ENCODE measurements at regions of chr9 and their contacts with region 1.

Region 1: DNA sequence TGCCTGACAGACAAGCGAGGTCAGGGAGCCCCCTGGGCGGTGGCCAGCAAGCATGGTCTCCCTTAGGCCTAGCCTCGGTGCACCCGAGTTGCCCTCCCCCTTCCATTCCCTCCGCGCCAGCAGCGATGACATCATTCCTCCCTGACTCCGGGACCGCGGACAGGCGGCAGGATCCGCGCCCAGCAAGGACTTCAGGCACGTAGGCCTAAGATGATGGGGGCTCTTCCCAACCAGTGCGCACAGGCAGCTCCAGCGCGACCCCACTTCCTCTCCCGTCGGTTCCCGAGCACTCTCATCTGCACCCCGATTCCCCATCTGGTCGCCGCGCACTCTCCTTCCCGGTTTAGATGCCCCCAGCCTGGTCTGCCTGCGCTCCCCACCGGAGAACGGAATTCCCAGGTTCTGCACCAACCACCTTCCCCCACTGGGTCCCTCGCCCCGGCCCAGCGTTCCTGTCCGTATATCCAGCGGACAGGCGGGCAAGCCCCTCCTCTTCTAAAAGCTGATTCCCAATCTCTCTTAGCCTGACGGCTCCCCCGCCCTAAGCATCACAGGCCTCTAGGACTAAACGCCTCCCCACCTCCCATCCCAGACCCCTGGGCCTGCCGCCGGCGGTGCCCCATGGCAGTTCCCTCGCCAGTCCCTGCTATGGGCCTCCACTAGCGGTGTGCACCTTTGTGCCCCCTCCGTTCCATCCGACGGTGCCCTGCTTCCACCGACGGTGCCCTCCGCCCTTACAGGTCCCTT is 931 bp downstream of the FAM219A start:
- H3K4me3 ChIP-seq: peak overlapping the region; percentile 63
- H3K27ac ChIP-seq: peak overlapping the region; percentile 77
- H3K4me1 ChIP-seq: peaks cover 2% of the 10 kb centered on the region; the same call in 1 of the 2 replicates
- CTCF ChIP-seq: peak; percentile 6; the same call in 1 of the 2 replicates

Region 2: DNA sequence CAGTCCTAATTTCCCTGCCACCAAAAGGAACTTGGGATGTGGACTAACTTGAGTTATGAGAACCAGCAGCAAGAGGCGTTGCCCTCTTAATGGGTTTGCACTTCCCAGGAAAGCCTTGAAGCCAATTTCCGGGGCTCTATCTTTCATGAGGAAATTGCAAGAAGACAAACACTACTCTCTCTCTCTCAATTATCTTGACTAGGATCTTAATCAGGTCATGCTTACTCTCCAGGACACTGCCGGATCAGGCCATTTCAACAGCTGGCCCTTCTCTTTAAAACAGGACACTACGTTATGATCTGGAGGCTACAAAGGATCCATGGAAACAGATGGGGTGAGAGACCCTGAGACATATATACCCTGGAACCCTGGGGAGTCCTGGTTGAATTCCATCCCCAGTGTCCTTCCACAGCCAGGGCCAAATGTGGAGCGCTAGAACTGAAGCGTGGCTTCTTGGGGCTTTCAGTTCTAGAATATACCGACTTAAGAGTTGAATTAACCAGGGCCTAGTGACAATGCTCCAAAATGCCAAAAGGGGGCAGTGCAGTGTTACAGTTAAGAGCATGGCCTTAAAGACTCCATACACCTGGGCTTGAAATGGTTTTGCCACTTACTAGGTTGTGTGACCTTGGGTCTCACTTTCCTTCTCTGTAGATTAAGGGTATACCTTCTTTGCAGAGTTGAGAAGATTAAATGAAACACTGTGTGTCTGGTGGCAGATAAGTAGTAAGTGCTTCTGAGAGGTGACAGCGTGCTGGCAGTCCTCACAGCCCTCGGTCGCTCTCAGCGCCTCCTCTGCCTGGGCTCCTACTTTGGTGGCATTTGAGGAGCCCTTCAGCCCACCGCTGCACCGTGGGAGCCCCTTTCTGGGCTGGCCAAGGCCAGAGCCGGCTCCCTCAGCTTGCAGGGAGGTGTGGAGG is 20.2 kb before region 1 on chr9:
- CTCF ChIA-PET with region 1: interaction called, 20 read pairs
- POLR2A ChIA-PET with region 1: no interaction called
- H3K4me3 ChIP-seq: no peak overlapping the region
- H3K27ac ChIP-seq: no peak overlapping the region
- H3K4me1 ChIP-seq: no peaks in the 10 kb centered on the region
- CTCF ChIP-seq: 0 out of 2 replicates have a peak, but pooled peaks have one; percentile 14

Region 3: DNA sequence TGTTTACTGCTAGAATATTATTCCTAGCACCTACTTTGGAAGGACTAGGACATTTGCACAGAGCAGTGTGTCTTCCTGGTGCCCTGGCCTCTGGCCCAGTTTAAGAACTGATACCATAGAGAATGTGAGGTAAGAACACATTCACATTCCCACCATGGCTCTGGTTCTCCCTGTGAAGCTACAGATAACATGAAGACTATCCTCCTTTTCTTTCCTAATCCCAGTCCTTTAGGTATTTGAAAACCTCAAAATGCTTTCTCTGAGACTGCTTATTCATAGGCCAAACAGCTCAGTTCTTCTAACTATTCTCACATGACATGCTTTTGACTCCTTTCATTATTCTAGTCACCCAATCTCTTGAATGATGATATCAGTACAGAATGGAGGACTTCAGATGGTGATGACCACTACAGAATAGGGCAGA is 11.0 kb before region 1 on chr9:
- CTCF ChIA-PET with region 1: interaction called, 14 read pairs
- POLR2A ChIA-PET with region 1: interaction called, 8 read pairs
- H3K4me3 ChIP-seq: no peak overlapping the region
- H3K27ac ChIP-seq: no peak overlapping the region
- H3K4me1 ChIP-seq: no peaks in the 10 kb centered on the region
- CTCF ChIP-seq: no peak

Region 4: GRCh38 chr9:34479431-34479866 is 22.0 kb after region 1 on chr9:
- CTCF ChIA-PET with region 1: no interaction called
- POLR2A ChIA-PET with region 1: no interaction called
- H3K4me3 ChIP-seq: no peak overlapping the region
- H3K27ac ChIP-seq: no peak overlapping the region
- H3K4me1 ChIP-seq: no peaks in the 10 kb centered on the region
- CTCF ChIP-seq: no peak

Region 5: DNA sequence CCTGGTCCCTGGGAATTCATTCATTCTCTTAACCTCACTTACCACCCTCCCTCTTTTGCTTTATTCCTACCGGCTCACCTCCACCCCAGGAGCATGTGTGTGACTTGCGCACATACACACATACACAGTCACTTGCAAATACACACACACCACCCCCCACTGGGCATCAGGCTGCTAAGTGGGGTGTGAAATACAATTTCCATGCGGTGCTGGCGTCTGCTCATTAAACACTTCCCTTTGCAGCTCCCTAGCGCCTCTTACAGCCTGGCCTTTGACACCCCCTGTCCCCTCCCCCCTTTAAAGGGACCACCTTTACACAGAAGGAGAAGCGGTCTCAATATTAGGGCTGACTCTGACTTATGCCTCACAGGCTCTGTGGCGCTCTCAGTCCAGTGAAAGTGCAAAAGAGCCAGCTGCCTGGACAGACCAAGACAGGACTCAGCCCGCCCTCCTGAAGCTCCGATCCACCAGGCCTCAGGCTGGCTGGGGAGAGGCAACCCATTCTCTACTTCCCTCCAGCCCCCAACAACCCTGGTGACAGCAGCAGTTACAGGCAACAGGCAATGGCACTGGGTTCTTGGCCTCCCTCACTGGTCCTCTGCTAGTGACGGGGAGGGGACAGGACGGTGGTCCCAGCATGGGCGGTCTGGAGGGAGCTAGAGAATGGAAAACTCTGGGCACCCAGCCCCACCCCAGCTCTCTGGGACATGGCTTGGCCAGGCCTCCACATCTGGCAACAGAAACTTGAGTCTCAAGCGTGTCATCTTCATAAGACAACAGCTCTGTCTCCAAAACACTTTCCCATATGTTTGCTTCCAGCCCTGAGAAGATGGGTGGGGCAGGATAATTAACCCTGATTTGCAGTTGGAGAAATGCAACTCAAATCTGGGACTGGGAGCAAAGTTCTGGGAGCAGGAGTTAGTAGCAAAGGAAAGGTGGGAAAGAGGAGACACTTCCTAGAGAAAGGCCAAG is 53.3 kb after region 1 on chr9:
- CTCF ChIA-PET with region 1: no interaction called
- POLR2A ChIA-PET with region 1: no interaction called
- H3K4me3 ChIP-seq: no peak overlapping the region
- H3K27ac ChIP-seq: no peak overlapping the region
- H3K4me1 ChIP-seq: peaks cover 3% of the 10 kb centered on the region
- CTCF ChIP-seq: no peak

Region 6: DNA sequence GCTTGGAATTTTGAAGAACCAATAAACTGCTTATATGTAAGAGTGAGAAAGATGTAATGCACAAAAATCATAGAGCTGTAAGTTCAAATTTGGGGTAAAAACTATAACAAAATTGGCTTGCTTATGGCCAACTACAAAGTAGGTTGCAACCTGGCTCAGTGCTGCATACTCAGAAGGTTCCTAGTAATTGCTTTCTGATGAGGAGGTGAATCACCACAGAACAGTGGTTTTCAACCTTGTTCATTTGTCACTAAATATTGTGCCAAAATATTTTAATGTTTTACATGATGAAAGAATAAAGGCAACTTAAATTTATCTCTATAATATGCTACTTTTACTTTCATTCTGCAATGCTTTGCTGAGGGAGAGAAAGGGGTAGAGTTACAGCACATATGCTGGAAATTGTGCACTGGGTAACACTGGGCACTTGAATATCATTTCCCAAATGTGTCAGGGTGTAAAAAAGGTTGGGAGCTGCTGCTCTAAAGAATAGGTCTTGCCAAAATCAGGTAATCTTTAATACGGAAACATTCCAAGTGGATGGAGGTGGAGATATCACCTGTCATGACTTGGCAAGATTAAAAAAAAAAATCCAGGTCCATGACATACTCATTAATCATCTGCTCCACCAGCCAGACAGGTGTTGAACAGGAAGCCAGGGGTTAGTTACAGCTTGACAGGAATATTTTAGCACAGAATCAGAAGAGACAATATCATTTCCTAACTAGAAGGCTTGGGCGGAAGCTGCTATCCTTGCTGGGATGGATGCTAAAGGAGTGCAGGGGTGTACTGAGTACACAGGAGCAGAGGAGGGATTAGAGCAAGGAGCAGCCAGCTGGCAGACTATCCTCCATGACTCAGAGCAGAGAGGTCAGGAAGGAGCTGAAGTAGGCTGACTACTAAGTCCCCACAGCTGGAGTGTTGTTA is 287.1 kb after region 1 on chr9:
- CTCF ChIA-PET with region 1: no interaction called
- POLR2A ChIA-PET with region 1: no interaction called
- H3K4me3 ChIP-seq: no peak overlapping the region
- H3K27ac ChIP-seq: no peak overlapping the region
- H3K4me1 ChIP-seq: no peaks in the 10 kb centered on the region
- CTCF ChIP-seq: no peak

Region 7: GRCh38 chr9:34989003-34989945 is 531.8 kb after region 1 on chr9 and contains the start of gene DNAJB5:
- CTCF ChIA-PET with region 1: no interaction called
- POLR2A ChIA-PET with region 1: no interaction called
- H3K4me3 ChIP-seq: peak within 1 kb of the TSS; percentile 76
- H3K27ac ChIP-seq: no peak within 1 kb of the TSS; the same call in 1 of the 2 replicates
- H3K4me1 ChIP-seq: peaks cover 2% of the 10 kb centered on the region; the same call in 1 of the 2 replicates
- CTCF ChIP-seq: no peak

Measured in HEK293 (cell line).